Activated CD4-positive, alpha-beta T cell treated with anti-CD3 and anti-CD28 coated beads, Interleukin-2, amount 10 ng/mL, durations not matched to agents 24 days and 14 days (primary cell): ENCODE measurements at regions of chr10 and their contacts with region 1.

Region 1: GRCh38 chr10:63629363-63630084 is 108.3 kb downstream of the REEP3 start:
- DNase-seq: peak; percentile 94
- H3K4me3 Mint-ChIP-seq: peak overlapping the region; percentile 94
- H3K27ac Mint-ChIP-seq: peak overlapping the region; percentile 94
- H3K4me1 Mint-ChIP-seq: peaks cover 38% of the 10 kb centered on the region
- H3K27me3 Mint-ChIP-seq: peaks cover 1% of the 10 kb centered on the region

Region 2: DNA sequence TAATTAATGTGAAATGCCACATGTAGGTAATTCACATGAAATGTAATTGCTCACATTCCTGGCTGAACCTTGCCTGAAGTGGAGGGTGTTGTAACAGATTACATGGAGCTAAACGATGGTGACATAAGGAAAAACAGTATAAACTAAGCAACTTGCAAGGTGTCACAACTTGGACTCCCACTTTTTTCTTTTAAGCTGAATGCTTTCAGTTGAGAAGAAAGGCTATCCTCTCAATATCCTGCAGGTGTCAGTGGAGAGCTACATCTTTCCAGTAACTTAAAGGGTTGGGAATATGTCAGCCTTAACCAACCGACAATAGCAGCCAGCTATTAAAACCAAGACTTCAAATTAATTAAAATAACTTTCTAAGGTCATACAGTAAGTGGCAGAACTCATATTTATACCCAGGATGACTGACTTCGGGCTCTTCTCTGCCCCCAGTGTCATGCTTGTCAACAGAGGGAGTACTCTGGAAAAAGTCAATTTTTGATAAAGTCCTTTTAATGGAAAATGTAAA is 462.7 kb before region 1 on chr10:
- intact Hi-C with region 1: loop called (anchors 1 kb)
- DNase-seq: peak; percentile 82
- H3K4me3 Mint-ChIP-seq: no peak overlapping the region
- H3K27ac Mint-ChIP-seq: no peak overlapping the region
- H3K4me1 Mint-ChIP-seq: peaks cover 33% of the 10 kb centered on the region
- H3K27me3 Mint-ChIP-seq: no peaks in the 10 kb centered on the region

Region 3: GRCh38 chr10:63355682-63356081 is 273.8 kb before region 1 on chr10:
- intact Hi-C with region 1: loop called (anchors 2 kb)
- DNase-seq: no peak
- H3K4me3 Mint-ChIP-seq: no peak overlapping the region
- H3K27ac Mint-ChIP-seq: peak overlapping the region; percentile 63
- H3K4me1 Mint-ChIP-seq: peaks cover 14% of the 10 kb centered on the region
- H3K27me3 Mint-ChIP-seq: no peaks in the 10 kb centered on the region

Region 4: DNA sequence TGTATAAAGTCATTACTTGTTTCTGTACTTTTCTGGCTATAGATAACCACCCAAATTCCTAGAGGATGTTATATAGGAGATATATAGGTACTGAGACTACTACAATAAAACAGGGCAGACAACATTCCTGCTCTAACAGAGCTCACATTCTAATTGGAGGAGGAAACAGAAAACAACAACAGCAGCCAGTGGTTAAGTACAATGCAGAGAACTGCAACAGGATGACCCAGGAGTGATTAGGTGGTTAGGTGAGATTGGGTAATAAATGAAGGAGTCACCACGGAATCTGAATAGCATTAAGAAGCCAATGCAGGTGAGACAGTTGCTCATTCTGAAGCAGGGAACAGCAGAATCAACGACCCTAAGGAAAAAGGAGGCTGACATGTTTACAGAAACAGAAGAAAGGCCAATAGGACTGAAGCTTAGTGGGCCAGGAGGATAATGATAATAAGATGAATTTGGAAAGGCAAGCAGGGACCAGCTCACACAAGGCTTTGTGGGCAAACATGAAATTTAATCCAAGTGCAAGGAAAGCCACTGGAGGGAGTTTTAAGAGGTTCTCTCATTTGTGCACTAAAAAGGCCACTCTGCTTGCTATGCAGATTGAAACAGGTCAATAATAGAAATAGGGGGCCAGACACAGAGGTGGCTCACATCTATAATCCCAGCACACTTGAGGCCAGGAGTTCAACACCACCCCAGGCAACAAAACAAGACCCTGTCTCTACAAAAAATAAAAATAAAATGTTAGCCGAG is 125.2 kb before region 1 on chr10:
- intact Hi-C with region 1: no loop called
- DNase-seq: no peak
- H3K4me3 Mint-ChIP-seq: no peak overlapping the region
- H3K27ac Mint-ChIP-seq: no peak overlapping the region
- H3K4me1 Mint-ChIP-seq: peaks cover 9% of the 10 kb centered on the region
- H3K27me3 Mint-ChIP-seq: no peaks in the 10 kb centered on the region

Region 5: DNA sequence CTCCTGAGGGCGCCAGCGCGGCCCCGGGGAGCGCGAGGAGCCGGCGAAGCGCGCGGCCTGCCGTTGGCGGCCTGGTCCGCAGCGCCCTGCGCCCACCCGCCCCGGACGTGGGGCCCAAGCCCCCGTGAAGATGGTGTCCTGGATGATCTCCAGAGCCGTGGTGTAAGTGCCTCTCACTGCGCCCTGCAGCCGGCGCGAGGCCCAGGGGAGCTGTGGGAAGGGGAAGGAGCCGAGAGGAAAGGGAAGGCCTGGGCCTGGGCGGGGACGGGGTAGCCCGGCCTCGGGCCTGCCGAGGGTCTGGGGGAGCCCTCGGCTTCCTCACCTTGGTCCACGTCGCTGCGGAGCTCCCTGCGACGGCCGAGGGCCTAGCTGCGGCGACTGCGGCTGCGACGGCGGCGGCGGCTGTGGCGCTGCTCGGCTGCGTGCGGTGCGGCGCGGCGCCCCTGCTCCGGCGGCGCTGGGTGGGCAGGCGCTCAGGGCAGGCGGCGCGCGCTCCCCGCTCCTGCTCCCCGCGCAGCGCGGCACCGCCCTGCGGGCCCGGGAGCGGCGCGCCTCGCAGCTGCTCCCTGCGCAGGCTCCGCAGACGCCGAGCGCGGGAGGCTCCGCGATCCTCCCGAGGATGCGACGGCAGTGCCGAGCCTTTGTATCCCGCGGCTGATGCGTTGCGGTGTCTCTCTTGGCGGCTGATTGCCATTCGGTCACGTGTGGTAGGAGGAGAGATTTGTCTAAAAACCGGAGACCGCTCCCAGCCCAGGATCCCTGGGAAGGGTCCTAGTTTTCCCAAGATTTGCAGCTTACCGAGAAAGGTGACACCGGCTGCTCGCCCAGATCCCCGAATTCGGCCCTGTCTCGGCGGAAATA is 107.9 kb before region 1 on chr10:
- intact Hi-C with region 1: loop called (anchors 2 kb)
- DNase-seq: peak; percentile 87
- H3K4me3 Mint-ChIP-seq: peak overlapping the region; percentile 91
- H3K27ac Mint-ChIP-seq: peak overlapping the region; percentile 94
- H3K4me1 Mint-ChIP-seq: peaks cover 52% of the 10 kb centered on the region
- H3K27me3 Mint-ChIP-seq: no peaks in the 10 kb centered on the region

Region 6: GRCh38 chr10:63707254-63707910 is 77.9 kb after region 1 on chr10:
- intact Hi-C with region 1: loop called (anchors 2 kb)
- DNase-seq: peak; percentile 63
- H3K4me3 Mint-ChIP-seq: peak overlapping the region; percentile 32
- H3K27ac Mint-ChIP-seq: peak overlapping the region; percentile 63
- H3K4me1 Mint-ChIP-seq: peaks cover 15% of the 10 kb centered on the region
- H3K27me3 Mint-ChIP-seq: no peaks in the 10 kb centered on the region